ENCODE measurements at regions of chr3 and their contacts with region 1.

Region 1: GRCh38 chr3:158644345-158644908 is at the start of gene GFM1:
- DNase-seq: peak; percentile 93 to 96 (median 94)
- ATAC-seq: peak; percentile 93 to 99 (median 98)
- H3K4me3 ChIP-seq: peak within 1 kb of the TSS; percentile 56 to 96 (median 80)
- H3K27ac ChIP-seq: peak within 1 kb of the TSS; percentile 67 to 96 (median 89)
- H3K4me1 ChIP-seq: peaks cover 6 to 35% (median 21%) of the 10 kb centered on the region in 12 donors
- H3K27me3 ChIP-seq: no peaks in the 10 kb centered on the region
- CTCF ChIP-seq: peak; percentile 60 to 98 (median 91)
- POLR2A ChIP-seq: peak in 1 of 2 donors; percentile 45
- total RNA-seq, gene GFM1: 49.0 to 77.7 (median 50.9) TPM

Region 2: DNA sequence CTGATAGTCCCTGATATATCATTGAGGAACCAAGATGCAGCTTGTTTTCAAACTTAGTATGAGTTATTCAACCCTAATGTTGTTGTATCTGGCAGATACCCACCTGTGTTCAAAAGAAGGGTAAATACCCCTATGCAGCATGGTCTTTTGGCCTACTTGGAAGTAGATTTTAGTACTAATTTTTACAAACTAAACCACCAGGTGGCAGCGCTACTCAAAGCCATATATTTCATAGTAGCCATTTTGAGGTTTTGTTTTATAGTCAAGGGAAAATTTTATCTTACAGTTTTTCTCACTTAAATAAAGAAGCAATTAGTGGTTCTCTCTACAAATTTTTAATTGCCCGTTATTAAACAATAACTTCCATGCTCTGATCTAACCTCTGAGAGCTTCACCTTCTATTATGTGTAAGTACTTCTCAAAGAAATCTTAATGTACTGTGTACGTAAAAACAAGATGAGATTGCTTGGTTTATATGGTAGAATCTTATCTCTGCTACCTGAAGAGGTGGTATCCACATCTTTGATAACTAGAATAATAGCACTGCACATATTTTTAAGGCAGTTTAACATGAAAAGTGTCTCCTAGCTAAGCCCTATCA is 104.9 kb before region 1 on chr3:
- intact Hi-C with region 1: loop called in 6 of 10 experiments (anchors 5 to 10 kb)
- DNase-seq: peak in 1 of 5 donors; percentile 7
- ATAC-seq: peak in 1 of 4 donors; percentile 50
- H3K4me3 ChIP-seq: no peak overlapping the region
- H3K27ac ChIP-seq: no peak overlapping the region
- H3K4me1 ChIP-seq: no peaks in the 10 kb centered on the region
- H3K27me3 ChIP-seq: no peaks in the 10 kb centered on the region
- CTCF ChIP-seq: peak; percentile 37 to 70 (median 61)
- POLR2A ChIP-seq: no peak

Region 3: DNA sequence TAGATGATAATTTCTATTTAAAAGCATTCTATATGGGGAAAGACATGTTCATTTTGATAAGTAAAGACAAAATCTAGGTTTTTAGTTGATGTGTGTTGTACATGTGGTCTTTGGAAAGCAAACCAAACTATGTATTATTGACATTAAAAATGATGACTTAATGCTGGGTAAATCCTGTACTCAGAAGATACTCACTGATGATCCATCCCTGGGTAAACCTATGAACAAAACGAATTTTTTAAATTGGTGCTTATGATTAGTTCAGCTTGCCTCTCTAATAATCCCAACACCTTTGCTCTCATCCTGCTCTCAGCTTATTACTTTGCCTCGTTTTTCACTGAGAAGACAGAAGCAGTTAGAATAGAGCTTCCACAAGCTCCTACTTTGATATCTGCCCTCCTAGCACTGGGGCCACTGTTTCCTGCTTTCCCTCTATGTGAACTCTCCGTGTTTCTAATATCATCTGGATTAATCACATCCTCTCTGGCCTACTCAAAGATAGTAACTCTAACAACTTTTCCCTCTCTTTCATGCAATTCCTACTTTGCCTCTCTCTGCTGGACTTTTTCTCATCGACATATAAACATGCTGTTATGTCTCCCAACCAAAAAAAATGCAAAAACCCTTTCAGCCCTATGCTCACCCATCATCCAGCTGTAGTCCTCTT is 58.5 kb after region 1 on chr3:
- intact Hi-C with region 1: no loop called
- DNase-seq: no peak
- ATAC-seq: no peak
- H3K4me3 ChIP-seq: no peak overlapping the region
- H3K27ac ChIP-seq: no peak overlapping the region
- H3K4me1 ChIP-seq: peaks cover 0 to 34% (median 8%) of the 10 kb centered on the region in 12 donors
- H3K27me3 ChIP-seq: no peaks in the 10 kb centered on the region
- CTCF ChIP-seq: no peak
- POLR2A ChIP-seq: no peak

Measured in heart left ventricle (tissue), 16 donors.